ENCODE measurements at regions of chr5 and their contacts with region 1.

Region 1: GRCh38 chr5:137605411-137605810 is 106.3 kb upstream of the SPOCK1 start:
- DNase-seq: no peak
- ATAC-seq: peak in 3 of 4 donors; percentile 31 to 64 (median 58)
- H3K4me3 ChIP-seq: no peak overlapping the region
- H3K27ac ChIP-seq: no peak overlapping the region
- H3K4me1 ChIP-seq: no peaks in the 10 kb centered on the region
- H3K27me3 ChIP-seq: peaks cover 0 to 6% (median 0%) of the 10 kb centered on the region in 9 donors
- CTCF ChIP-seq: peak in 5 of 12 donors; percentile 15 to 36 (median 19)
- POLR2A ChIP-seq: no peak

Region 2: GRCh38 chr5:136399527-136399926 is 1205.9 kb before region 1 on chr5:
- intact Hi-C with region 1: no loop called
- DNase-seq: no peak
- ATAC-seq: no peak
- H3K4me3 ChIP-seq: no peak overlapping the region
- H3K27ac ChIP-seq: no peak overlapping the region
- H3K4me1 ChIP-seq: no peaks in the 10 kb centered on the region
- H3K27me3 ChIP-seq: peaks cover 0 to 16% (median 0%) of the 10 kb centered on the region in 9 donors
- CTCF ChIP-seq: no peak
- POLR2A ChIP-seq: no peak

Region 3: DNA sequence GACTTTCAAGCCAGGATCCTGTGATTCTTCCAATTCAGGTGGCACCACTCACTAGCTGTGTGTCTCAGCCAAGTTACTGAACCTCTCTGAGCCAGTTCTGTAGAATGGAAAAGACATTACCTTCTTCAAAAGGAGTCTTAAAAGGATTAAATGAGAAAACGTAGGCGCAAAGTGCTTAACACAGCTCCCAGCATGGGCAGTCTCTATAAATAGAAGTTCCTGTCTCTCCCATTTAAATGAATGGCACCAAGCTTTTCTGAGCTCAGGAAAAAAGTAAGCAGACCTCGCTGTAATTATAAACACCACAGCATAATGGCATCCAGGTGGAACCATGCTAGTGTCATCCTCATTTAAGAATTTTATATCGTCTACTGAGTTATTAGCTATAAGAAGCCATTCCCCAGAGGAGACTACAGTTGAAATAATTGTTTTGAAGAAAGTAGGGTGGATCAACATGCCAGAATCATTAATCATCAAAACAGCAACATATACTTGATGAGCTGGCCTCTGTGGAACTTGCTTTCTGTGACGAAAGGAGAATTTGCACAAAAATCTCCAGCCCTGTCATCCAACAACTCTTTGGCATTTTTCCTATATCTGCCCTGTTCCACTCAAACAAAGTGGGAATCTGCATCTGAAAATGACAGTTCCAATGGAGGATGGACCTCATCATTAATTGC is 295.2 kb before region 1 on chr5:
- intact Hi-C with region 1: loop called in 1 of 10 experiments (anchors 10 kb)
- DNase-seq: no peak
- ATAC-seq: peak in 1 of 4 donors; percentile 19
- H3K4me3 ChIP-seq: no peak overlapping the region
- H3K27ac ChIP-seq: no peak overlapping the region
- H3K4me1 ChIP-seq: peaks cover 0 to 18% (median 4%) of the 10 kb centered on the region in 12 donors
- H3K27me3 ChIP-seq: no peaks in the 10 kb centered on the region
- CTCF ChIP-seq: no peak
- POLR2A ChIP-seq: no peak

Region 4: GRCh38 chr5:137320056-137321045 is 285.1 kb before region 1 on chr5:
- intact Hi-C with region 1: loop called in 4 of 10 experiments (anchors 5 to 10 kb)
- DNase-seq: no peak
- ATAC-seq: peak in 2 of 4 donors; percentile 23 to 41
- H3K4me3 ChIP-seq: no peak overlapping the region
- H3K27ac ChIP-seq: no peak overlapping the region
- H3K4me1 ChIP-seq: peaks cover 0 to 23% (median 6%) of the 10 kb centered on the region in 12 donors
- H3K27me3 ChIP-seq: peaks cover 0 to 4% (median 0%) of the 10 kb centered on the region in 9 donors
- CTCF ChIP-seq: peak; percentile 70 to 89 (median 76)
- POLR2A ChIP-seq: no peak